Brain microvascular endothelial cell (primary cell): ENCODE measurements at regions of chr19 and their contacts with region 1.

Region 1: GRCh38 chr19:6279931-6280591 is at the start of gene MLLT1:
- DNase-seq: peak; percentile 91
- H3K4me3 ChIP-seq: peak within 1 kb of the TSS; percentile 77
- H3K27ac ChIP-seq: peak within 1 kb of the TSS; percentile 32
- H3K27me3 ChIP-seq: no peaks in the 10 kb centered on the region
- CTCF ChIP-seq: peak; percentile 53

Region 2: GRCh38 chr19:6048808-6049405 is 231.2 kb before region 1 on chr19:
- in situ Hi-C with region 1: loop called (anchors 25 kb)
- DNase-seq: peak; percentile 58
- H3K4me3 ChIP-seq: no peak overlapping the region
- H3K27ac ChIP-seq: no peak overlapping the region
- H3K27me3 ChIP-seq: no peaks in the 10 kb centered on the region
- CTCF ChIP-seq: peak; percentile 93

Region 3: GRCh38 chr19:6238643-6239281 is 41.3 kb before region 1 on chr19:
- in situ Hi-C with region 1: loop called (anchors 5 kb)
- DNase-seq: no peak
- H3K4me3 ChIP-seq: no peak overlapping the region
- H3K27ac ChIP-seq: no peak overlapping the region
- H3K27me3 ChIP-seq: no peaks in the 10 kb centered on the region
- CTCF ChIP-seq: no peak